Adrenal gland (tissue), 19 donors: ENCODE measurements at regions of chr13 and their contacts with region 1.

Region 1: DNA sequence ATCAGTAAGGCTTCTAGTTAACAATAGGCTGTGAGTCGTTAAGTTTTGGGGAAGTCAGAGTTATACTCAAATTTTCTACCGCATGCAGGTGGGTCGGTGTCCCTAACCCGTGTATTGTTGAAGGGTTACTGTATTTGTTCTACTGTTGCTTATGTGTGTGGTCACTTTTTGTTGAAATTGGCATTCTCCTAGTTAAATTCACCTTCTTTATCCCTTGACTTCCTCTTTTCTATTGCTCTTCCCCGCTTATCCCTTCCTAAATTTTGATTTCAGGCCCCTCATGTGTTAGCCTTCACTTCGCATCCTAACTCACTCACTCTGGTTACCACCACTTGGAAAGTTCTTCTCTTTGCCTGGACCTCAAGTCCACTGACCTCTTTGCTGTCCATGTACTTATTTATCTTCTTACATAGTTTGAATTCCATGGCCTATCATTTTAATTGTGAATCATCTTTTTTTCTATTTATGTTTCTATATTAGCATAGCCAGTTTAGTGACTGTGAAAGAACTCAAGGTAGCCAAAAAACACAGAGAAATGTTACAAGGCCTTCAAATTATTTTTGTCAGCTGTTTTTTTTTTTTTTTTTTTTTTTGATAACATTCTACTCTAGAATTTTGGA is 52.9 kb downstream of the NDFIP2 start:
- DNase-seq: no peak
- H3K4me3 ChIP-seq: no peak overlapping the region
- H3K27ac ChIP-seq: no peak overlapping the region
- H3K4me1 ChIP-seq: peaks cover 11 to 22% of the 10 kb centered on the region in 2 donors
- H3K27me3 ChIP-seq: no peaks in the 10 kb centered on the region
- CTCF ChIP-seq: no peak
- POLR2A ChIP-seq: no peak

Region 2: GRCh38 chr13:79435561-79435990 is 98.3 kb before region 1 on chr13:
- intact Hi-C with region 1: loop called in 1 of 2 experiments (anchors 10 kb)
- DNase-seq: no peak
- H3K4me3 ChIP-seq: no peak overlapping the region
- H3K27ac ChIP-seq: no peak overlapping the region
- H3K4me1 ChIP-seq: peaks cover 0 to 7% of the 10 kb centered on the region in 2 donors
- H3K27me3 ChIP-seq: no peaks in the 10 kb centered on the region
- CTCF ChIP-seq: no peak
- POLR2A ChIP-seq: no peak

Region 3: GRCh38 chr13:79480954-79481684 is 52.8 kb before region 1 on chr13 and contains the start of gene NDFIP2:
- intact Hi-C with region 1: loop called in 1 of 2 experiments (anchors 10 kb)
- DNase-seq: peak; percentile 81 to 91 (median 87)
- H3K4me3 ChIP-seq: peak within 1 kb of the TSS; percentile 44 to 90 (median 72)
- H3K27ac ChIP-seq: peak within 1 kb of the TSS in 4 of 5 donors; percentile 42 to 85 (median 80)
- H3K4me1 ChIP-seq: peaks cover 5 to 26% of the 10 kb centered on the region in 2 donors
- H3K27me3 ChIP-seq: no peaks in the 10 kb centered on the region
- CTCF ChIP-seq: peak in 2 of 6 experiments; percentile 5 to 27
- POLR2A ChIP-seq: peak; percentile 42 to 79
- total RNA-seq, gene NDFIP2: 16.4 to 62.1 (median 40.7) TPM

Region 4: GRCh38 chr13:80389073-80390038 is 855.5 kb after region 1 on chr13:
- intact Hi-C with region 1: no loop called
- DNase-seq: no peak
- H3K4me3 ChIP-seq: no peak overlapping the region
- H3K27ac ChIP-seq: no peak overlapping the region
- H3K4me1 ChIP-seq: no peaks in the 10 kb centered on the region
- H3K27me3 ChIP-seq: no peaks in the 10 kb centered on the region
- CTCF ChIP-seq: no peak
- POLR2A ChIP-seq: no peak